HepG2 (cell line): ENCODE measurements at regions of chr11 and their contacts with region 1.

Region 1: DNA sequence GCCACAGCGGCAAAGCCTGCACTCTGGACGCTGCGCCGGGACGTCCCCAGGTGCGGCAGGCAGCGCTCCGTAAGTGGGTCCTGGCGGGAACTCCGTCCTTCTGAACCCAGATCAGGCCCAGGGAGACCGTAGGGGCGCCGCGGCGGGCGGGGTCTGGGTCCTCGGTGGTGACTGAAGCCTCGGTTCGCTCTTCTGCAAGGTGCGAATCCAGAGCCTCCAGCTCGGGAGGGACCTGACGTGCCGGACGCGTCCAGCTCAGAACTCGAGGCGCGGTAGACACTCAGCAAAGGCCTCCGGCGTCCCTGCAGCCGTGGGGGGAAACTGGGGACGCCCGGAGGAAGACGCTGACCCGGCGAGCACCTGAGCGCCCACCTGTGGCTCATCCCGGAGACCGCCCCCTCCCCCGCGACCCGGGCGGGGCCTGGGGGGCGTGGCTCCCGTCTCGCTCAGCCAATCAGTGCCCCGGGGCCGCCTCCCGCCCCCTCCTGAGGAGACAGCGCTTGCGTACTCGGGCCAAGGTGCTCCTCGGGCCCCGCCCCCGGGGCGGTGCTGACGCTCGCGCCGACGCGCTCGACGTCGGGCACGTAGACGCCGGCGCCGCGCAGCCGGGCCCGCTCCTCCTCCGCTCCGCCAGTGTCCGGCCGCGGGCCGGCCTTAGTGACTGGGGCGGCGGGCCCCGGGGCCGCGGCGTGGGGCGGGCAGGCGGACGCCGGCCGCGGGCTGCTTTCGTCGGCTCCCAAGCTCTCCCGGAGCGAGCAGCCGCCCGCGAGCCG is at the start of gene PPFIA1:
- DNase-seq: peak; percentile 90
- ATAC-seq: peak; percentile 93
- H3K4me3 ChIP-seq: peak within 1 kb of the TSS; percentile 86 to 97 (median 92)
- H3K27ac ChIP-seq: peak within 1 kb of the TSS; percentile 79
- H3K4me1 ChIP-seq: peaks cover 43% of the 10 kb centered on the region
- H3K27me3 ChIP-seq: peaks cover 0 to 4% of the 10 kb centered on the region in 2 experiments; a peak in 2 of 5 replicates
- CTCF ChIP-seq: peak; percentile 61
- EP300 ChIP-seq: no peak
- POLR2A ChIP-seq: peak; percentile 55 to 71
- RAD21 ChIP-seq: 0 out of 2 replicates have a peak, but pooled peaks have one; percentile 43
- total RNA-seq, gene PPFIA1: 27.3 and 29.9 TPM in 2 replicates

Region 2: DNA sequence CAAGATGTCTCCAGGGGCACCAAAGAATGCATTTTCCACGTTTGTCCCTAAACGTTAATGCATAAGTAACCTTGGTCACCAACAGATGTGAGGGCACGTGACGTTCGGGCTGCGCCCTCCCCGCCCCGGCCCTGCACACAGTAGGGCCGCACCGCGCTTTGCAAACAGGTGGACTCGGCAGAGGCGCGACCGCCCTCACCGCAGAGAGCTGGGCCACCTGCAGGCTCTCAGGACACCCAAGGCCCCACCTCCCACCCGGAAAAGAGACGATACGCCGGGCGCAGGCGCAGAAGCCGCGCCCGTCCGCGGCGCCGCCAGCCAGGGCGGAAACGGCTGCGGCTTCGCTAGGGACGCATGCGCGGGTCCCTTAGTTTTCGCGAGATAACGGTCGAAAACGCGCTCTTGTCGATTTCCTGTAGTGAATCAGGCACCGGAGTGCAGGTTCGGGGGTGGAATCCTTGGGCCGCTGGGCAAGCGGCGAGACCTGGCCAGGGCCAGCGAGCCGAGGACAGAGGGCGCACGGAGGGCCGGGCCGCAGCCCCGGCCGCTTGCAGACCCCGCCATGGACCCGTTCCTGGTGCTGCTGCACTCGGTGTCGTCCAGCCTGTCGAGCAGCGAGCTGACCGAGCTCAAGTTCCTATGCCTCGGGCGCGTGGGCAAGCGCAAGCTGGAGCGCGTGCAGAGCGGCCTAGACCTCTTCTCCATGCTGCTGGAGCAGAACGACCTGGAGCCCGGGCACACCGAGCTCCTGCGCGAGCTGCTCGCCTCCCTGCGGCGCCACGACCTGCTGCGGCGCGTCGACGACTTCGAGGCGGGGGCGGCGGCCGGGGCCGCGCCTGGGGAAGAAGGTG is 67.2 kb before region 1 on chr11 and contains the start of gene FADD:
- CTCF ChIA-PET with region 1: no interaction called
- POLR2A ChIA-PET with region 1: interaction called, 3 read pairs
- in situ Hi-C with region 1: no loop called
- intact Hi-C with region 1: loop called (anchors 10 kb)
- DNase-seq: peak; percentile 91
- ATAC-seq: peak; percentile 81
- H3K4me3 ChIP-seq: peak within 1 kb of the TSS; percentile 78 to 90 (median 84)
- H3K27ac ChIP-seq: peak within 1 kb of the TSS; percentile 88
- H3K4me1 ChIP-seq: peaks cover 19% of the 10 kb centered on the region
- H3K27me3 ChIP-seq: no peaks in the 10 kb centered on the region; a peak in 1 of 5 replicates
- CTCF ChIP-seq: 0 out of 2 replicates have a peak, but pooled peaks have one; percentile 19
- EP300 ChIP-seq: no peak
- POLR2A ChIP-seq: peak; percentile 77 to 87
- RAD21 ChIP-seq: no peak
- total RNA-seq, gene FADD: 21.4 and 22.2 TPM in 2 replicates